PC-9 (cell line): ENCODE measurements at regions of chr18 and their contacts with region 1.

Region 1: GRCh38 chr18:3281456-3282400 is 19.8 kb downstream of the MYL12B start:
- DNase-seq: peak in 1 of 2 experiments; percentile 75
- H3K4me3 ChIP-seq: no peak overlapping the region
- H3K27ac ChIP-seq: peak overlapping the region; percentile 23; the same call in 1 of the 2 replicates
- H3K4me1 ChIP-seq: peaks cover 24% of the 10 kb centered on the region
- H3K27me3 ChIP-seq: no peaks in the 10 kb centered on the region
- CTCF ChIP-seq: peak; percentile 85

Region 2: DNA sequence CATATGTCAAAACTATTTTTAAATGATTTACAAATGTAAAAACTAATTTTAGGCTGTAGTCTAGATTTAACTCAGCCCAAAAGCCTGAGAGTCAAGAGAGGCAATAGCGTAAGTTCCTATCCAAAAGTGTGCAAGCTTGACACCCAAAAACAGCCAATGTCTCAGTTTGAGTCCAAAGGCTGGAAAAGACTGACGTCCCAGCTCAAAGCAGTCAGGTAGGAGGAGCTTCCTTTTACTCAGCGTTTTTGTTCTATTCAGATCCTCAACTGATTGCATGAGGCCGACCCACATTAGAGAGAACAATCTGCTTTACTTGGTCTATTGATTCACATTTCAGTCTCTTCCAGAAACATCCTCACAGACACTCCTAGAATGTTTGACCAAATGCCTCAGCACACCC is 32.0 kb after region 1 on chr18:
- CTCF ChIA-PET with region 1: no interaction called
- POLR2A ChIA-PET with region 1: no interaction called
- intact Hi-C with region 1: no loop called
- DNase-seq: no peak
- H3K4me3 ChIP-seq: no peak overlapping the region
- H3K27ac ChIP-seq: no peak overlapping the region
- H3K4me1 ChIP-seq: no peaks in the 10 kb centered on the region
- H3K27me3 ChIP-seq: no peaks in the 10 kb centered on the region
- CTCF ChIP-seq: no peak

Region 3: GRCh38 chr18:3368193-3368592 is 86.5 kb after region 1 on chr18:
- CTCF ChIA-PET with region 1: no interaction called
- POLR2A ChIA-PET with region 1: interaction called, 12 read pairs
- intact Hi-C with region 1: no loop called
- DNase-seq: peak; percentile 31 to 47
- H3K4me3 ChIP-seq: no peak overlapping the region
- H3K27ac ChIP-seq: peak overlapping the region; percentile 79
- H3K4me1 ChIP-seq: 0 out of 2 replicates have a peak, but pooled peaks cover 16% of the 10 kb centered on the region
- H3K27me3 ChIP-seq: no peaks in the 10 kb centered on the region
- CTCF ChIP-seq: no peak

Region 4: DNA sequence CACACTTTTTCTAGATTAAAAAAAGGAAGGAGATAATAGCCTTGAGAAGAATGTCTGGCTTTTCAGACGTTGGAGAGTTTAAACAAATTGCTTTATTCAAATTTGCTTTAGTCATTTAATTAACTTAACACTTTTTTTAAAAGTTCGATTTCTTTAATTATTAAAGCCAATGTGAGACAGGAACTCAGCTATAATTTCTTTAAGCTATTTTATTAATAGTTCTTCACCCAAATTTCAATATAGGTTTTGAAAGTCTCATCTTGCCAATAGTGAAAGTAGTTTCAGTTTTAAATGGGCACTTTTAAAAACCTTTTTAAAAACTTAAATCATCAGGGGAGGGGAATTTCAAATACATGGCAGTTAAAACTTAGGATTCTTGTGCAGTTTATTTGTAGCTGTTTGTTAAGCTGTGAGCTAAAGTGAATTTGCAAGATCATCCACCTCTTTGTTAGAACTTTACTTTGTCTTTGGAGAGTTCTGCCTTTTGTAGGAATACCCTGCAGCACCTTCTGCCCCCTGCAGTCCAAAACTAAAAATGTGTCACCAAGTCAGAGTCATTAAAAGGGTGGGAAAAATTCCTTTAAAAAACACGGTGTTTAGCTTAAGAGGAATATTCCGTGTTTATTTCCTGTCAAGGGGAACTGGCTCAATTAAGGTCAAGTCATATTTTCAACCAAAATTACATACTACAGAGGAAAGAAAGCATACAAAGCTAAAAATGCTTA is 172.8 kb after region 1 on chr18:
- CTCF ChIA-PET with region 1: interaction called, 31 read pairs
- POLR2A ChIA-PET with region 1: interaction called, 11 read pairs
- intact Hi-C with region 1: loop called (anchors 1 kb)
- DNase-seq: peak; percentile 41 to 52
- H3K4me3 ChIP-seq: peak overlapping the region; percentile 83
- H3K27ac ChIP-seq: peak overlapping the region; percentile 96
- H3K4me1 ChIP-seq: peaks cover 49% of the 10 kb centered on the region
- H3K27me3 ChIP-seq: no peaks in the 10 kb centered on the region; the same call in 1 of the 2 replicates
- CTCF ChIP-seq: peak; percentile 79

Region 5: DNA sequence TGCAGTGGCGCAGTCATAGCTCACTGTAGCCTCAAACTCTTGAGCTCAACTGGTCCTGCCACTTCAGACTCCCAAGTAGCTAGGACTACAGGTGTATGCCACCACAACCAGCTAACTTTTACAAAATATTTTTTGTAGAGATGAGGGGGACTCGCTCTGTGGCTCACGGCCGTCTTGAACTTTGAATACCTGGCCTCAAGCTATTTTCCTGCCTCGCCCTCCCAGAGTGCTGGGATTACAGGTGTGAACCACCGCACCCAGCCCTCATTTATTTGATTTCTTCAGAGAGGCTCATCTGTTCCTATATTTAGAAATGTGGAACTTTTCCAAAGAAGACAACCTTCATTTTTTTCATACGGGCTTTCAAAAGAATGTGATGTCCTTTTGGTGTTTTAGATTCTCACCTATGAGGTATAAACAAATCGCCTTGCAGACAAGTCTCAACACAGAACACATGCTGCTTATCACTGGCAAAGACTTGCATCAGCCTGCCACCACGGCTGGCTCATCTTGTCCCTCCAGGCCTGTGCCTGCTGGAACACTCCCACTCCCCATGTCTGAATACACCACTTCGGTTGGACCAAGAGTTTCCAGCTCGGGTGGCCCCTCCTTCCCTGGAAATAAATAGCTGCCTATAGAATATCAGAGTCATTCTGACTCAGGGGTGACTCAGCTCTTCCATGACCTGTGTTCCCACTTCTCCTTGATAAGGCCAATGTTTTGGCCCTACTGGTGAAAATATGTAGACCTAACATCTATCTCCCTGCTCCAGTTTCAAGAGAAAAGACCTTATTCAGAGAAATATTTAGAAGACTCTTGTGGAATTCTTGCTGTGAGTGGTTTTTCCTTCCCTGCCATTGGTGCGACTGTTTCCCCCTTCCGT is 370.9 kb after region 1 on chr18:
- CTCF ChIA-PET with region 1: no interaction called
- POLR2A ChIA-PET with region 1: interaction called, 3 read pairs
- intact Hi-C with region 1: loop called (anchors 5 kb)
- DNase-seq: peak; percentile 97 to 99
- H3K4me3 ChIP-seq: peak overlapping the region; percentile 63
- H3K27ac ChIP-seq: peak overlapping the region; percentile 99
- H3K4me1 ChIP-seq: peaks cover 80% of the 10 kb centered on the region
- H3K27me3 ChIP-seq: no peaks in the 10 kb centered on the region
- CTCF ChIP-seq: 0 out of 2 replicates have a peak, but pooled peaks have one; percentile 19

Region 6: DNA sequence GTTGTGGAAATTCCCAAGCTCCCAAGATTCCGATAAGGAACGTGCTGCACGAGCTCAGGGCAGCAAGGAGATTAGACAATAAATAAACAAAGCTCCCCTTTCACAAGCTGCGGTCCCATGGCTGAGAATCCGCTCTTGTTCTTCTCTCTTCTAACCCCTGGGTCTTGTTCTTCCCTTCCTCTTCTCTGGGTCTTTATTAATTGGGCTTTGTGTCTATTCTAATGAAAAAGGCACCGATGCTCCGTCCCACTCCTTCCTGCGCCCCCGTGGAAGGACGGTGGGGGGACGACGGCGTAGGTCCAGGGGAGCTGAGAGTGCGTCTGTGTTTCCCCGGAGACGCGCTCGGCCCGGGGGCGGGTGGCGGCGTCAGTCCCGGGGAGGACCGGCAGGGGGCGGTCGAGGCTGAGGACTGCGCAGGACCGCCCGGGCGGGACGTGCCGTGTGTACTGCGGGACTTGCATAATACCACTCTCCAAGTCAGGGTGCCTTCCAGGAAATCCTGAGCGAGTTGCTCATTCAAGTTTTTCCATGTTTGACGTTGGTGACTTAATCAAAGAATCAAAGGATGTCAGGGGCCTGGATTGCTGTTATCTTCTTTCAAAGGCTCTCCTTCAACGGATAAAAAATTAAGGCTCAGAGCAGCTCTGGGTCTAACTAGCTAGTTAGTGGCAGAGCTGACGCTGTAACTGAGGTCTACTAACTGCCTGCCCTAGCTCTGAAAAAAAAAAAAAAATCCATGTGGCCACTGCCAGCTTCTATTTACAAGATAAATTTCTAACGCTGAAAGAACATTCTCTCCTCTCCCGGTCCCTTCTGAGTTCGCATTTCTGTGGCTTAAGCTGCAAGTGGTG is 489.6 kb after region 1 on chr18:
- CTCF ChIA-PET with region 1: no interaction called
- POLR2A ChIA-PET with region 1: no interaction called
- intact Hi-C with region 1: loop called (anchors 1 kb)
- DNase-seq: peak; percentile 69 to 91
- H3K4me3 ChIP-seq: peak overlapping the region; percentile 51
- H3K27ac ChIP-seq: peak overlapping the region; percentile 13; the same call in 1 of the 2 replicates
- H3K4me1 ChIP-seq: peaks cover 30% of the 10 kb centered on the region
- H3K27me3 ChIP-seq: no peaks in the 10 kb centered on the region
- CTCF ChIP-seq: peak; percentile 92

Region 7: GRCh38 chr18:4068552-4069158 is 786.9 kb after region 1 on chr18:
- CTCF ChIA-PET with region 1: interaction called, 20 read pairs
- POLR2A ChIA-PET with region 1: no interaction called
- intact Hi-C with region 1: loop called (anchors 2 kb)
- DNase-seq: peak in 1 of 2 experiments; percentile 40
- H3K4me3 ChIP-seq: no peak overlapping the region
- H3K27ac ChIP-seq: no peak overlapping the region
- H3K4me1 ChIP-seq: no peaks in the 10 kb centered on the region
- H3K27me3 ChIP-seq: no peaks in the 10 kb centered on the region
- CTCF ChIP-seq: peak; percentile 86